ENCODE measurements at regions of chr1 and their contacts with region 1.

Region 1: DNA sequence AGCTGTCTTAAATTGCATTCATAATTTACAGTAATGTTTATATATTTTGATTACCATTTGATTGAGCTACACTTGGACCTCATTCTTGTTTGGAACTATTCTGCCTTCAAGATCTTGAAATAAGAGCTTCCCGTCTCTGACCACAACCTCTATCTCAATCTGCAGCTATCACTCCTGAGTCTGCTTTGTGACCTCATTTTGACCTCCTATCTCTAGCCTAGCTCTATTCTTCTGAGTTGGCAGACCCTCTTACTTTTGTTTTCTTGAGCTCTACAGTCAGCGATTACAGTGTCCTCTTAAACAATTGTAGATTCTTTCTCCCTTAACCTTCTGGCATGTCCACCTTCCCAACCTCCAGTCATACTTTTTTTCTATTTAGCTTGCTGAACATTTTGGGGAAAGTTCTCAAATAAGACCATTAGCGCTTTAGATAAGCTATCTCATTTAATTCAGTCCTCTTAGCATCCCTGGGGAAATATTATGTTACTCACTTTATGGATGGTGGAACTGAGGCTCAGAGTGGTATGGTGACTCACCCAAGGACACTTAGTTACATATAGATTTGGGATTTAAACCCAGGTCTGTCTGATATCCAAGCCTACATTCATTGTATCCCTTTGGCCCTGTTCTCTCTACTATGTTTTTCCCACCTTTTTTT is 19.1 kb downstream of the RPAP2 start:
- DNase-seq: no peak
- H3K4me3 Mint-ChIP-seq: peak overlapping the region; percentile 66
- H3K27ac Mint-ChIP-seq: peak overlapping the region; percentile 91
- H3K4me1 Mint-ChIP-seq: peaks cover 68% of the 10 kb centered on the region
- H3K27me3 Mint-ChIP-seq: no peaks in the 10 kb centered on the region

Region 2: GRCh38 chr1:92333668-92334067 is 15.7 kb after region 1 on chr1:
- intact Hi-C with region 1: loop called (anchors 2 kb)
- DNase-seq: no peak
- H3K4me3 Mint-ChIP-seq: peak overlapping the region; percentile 10
- H3K27ac Mint-ChIP-seq: peak overlapping the region; percentile 78
- H3K4me1 Mint-ChIP-seq: peaks cover 31% of the 10 kb centered on the region
- H3K27me3 Mint-ChIP-seq: no peaks in the 10 kb centered on the region

Region 3: DNA sequence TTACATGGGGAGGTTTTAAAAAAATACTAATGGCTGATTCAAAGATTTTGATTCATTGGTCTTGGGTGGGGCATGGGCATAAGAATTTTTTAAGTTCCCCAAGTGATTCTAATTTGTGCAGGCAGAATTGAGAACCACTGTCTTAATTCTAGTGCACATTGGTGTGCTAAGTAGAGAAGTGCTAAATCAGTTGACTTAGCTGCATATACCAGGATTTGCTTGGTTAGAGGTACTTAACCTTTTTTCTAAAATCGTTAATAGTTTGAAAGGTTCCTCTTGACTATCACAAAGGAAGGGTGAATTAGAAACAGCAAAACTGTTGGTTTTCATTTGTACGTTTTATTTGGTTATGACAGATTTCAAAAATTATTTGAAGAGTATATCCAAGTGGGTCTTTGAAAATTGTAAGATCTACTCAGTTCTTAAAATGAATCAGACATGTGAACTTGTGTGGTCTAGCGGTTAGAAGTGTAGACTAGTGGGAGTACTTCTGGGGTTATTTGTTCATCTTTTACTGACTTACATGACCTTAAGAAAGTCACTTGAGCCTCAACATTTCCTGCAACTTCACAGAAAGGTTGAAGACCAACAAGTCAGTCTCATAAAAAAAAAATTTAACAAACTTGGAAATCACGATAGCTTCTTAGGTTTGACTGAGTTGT is 47.5 kb after region 1 on chr1:
- intact Hi-C with region 1: loop called (anchors 1 kb)
- DNase-seq: peak; percentile 10
- H3K4me3 Mint-ChIP-seq: peak overlapping the region; percentile 3
- H3K27ac Mint-ChIP-seq: peak overlapping the region; percentile 76
- H3K4me1 Mint-ChIP-seq: peaks cover 59% of the 10 kb centered on the region
- H3K27me3 Mint-ChIP-seq: no peaks in the 10 kb centered on the region

Region 4: GRCh38 chr1:92583821-92584760 is 266.1 kb after region 1 on chr1:
- intact Hi-C with region 1: loop called (anchors 1 kb)
- DNase-seq: no peak
- H3K4me3 Mint-ChIP-seq: peak overlapping the region; percentile 62
- H3K27ac Mint-ChIP-seq: peak overlapping the region; percentile 91
- H3K4me1 Mint-ChIP-seq: peaks cover 75% of the 10 kb centered on the region
- H3K27me3 Mint-ChIP-seq: no peaks in the 10 kb centered on the region

Region 5: DNA sequence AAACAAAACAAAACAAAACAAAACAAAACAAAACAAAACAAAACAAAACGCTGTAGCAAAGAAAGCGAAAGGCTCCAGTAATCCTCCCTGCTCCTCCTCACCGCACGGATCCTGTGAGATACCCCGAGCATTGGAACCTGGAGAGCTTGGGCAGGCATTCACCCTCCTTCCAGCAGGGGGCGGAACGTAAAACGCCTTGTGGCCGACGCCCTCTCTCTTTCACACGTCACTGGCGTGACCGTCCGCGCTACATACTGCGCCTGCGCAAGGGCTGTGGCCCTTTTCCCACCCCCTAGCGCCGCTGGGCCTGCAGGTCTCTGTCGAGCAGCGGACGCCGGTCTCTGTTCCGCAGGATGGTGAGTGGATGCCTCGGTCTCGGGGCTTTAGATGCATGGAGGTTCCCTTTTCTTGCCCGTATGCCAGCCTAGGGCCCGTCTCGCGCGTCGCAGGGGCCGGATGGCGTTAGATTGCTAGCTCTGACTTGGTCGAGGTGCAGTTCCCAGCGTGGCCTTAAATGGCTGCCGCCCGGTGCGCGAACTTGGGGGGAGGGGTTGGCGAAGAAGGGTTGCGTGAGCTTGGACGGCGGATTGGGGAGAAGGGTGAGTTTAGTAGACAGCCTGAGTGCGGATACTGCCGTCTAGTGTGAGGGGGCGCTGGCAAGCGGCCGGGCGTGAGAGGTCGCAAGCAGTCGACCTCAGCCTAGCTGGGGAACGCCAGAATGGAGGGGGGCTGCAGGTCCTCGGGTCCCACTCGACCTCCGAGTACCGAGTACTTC is 514.0 kb after region 1 on chr1 and contains the start of gene RPL5:
- intact Hi-C with region 1: loop called (anchors 5 kb)
- DNase-seq: peak; percentile 96
- H3K4me3 Mint-ChIP-seq: peak within 1 kb of the TSS; percentile 96
- H3K27ac Mint-ChIP-seq: peak within 1 kb of the TSS; percentile 97
- H3K4me1 Mint-ChIP-seq: peaks cover 35% of the 10 kb centered on the region
- H3K27me3 Mint-ChIP-seq: peaks cover 2% of the 10 kb centered on the region
- total RNA-seq, gene RPL5: 1,115 and 1,120 TPM in 2 replicates

Measured in activated T-helper 1 cell treated with anti-CD3 and anti-CD28 coated beads, Interleukin-12 subunit alpha, Interleukin-12 subunit beta, Interleukin-2, Interleukin-4 antibody, amounts not matched to agents 30 ng/mL and 10 ng/mL and 1 ng/mL, durations not matched to agents 14 hours and 24 hours and 36 hours (primary cell).